Lower leg skin (tissue), 4 donors: ENCODE measurements at regions of chr12 and their contacts with region 1.

Region 1: DNA sequence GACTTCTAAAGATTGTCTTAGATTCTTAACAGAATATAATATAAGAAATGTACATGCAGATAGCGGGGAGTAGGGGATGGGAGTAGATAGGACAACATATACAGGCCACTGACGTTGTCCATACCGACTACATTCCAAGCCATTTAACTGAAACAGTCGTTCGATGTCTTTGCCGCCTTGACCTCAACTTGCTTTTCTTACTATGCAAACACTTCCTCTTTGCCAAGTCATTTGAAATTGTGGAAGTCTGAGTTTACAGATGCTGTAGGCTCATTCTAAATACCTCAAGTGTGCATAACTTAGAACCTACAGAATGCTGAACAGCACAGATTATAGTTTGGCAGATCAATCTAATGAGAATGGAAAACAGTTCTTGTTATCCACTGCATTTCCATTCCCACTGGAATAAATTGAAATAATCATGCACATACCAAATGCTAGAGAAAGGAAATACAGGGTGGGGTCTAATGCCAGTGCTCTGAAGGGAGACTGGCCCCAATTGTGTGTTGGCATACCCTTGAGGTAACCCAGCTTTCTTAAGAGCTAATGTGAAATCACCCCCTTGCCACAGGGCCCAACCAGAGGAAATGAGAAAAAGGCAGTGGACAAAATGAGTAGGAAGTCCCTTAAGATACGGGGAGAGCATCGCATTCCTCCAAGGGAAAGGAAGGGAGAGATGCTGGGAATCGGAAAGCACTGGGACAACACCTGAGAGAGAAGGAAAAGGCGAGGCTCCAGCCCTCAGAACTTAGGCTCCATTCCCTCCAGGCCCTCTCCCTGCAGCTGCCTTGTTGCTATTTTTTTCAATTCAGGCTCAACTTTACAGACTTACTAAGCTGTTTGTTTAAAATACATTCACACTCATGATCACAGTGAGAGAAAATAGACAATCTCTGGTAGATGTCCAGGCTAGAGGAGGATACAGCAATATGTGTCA is 380.9 kb upstream of the TMTC1 start:
- DNase-seq: no peak
- H3K4me3 ChIP-seq: no peak overlapping the region
- CTCF ChIP-seq: no peak
- POLR2A ChIP-seq: no peak

Region 2: DNA sequence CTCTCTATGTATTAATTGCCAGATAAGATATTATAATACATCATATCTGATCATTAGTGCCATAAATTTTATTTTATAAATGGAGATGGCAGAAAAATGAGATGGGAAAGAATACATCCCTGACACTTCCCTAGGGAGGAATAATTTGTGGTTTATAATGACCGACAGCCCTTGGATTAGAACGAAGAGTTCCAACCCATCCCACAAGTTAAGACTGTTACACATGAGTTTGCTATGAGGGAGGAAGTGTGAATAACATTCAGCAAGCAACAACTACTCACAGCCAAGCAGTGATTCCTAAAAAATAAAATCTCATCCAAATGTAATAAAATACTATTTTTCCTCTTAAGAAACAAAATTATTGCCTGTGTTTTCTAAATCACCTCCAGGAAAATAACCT is 1675.4 kb before region 1 on chr12:
- intact Hi-C with region 1: loop called (anchors 5 kb)
- DNase-seq: no peak
- H3K4me3 ChIP-seq: no peak overlapping the region
- CTCF ChIP-seq: no peak
- POLR2A ChIP-seq: no peak

Region 3: GRCh38 chr12:29921307-29921706 is 243.3 kb before region 1 on chr12:
- intact Hi-C with region 1: no loop called
- DNase-seq: no peak
- H3K4me3 ChIP-seq: no peak overlapping the region
- CTCF ChIP-seq: no peak
- POLR2A ChIP-seq: no peak

Region 4: DNA sequence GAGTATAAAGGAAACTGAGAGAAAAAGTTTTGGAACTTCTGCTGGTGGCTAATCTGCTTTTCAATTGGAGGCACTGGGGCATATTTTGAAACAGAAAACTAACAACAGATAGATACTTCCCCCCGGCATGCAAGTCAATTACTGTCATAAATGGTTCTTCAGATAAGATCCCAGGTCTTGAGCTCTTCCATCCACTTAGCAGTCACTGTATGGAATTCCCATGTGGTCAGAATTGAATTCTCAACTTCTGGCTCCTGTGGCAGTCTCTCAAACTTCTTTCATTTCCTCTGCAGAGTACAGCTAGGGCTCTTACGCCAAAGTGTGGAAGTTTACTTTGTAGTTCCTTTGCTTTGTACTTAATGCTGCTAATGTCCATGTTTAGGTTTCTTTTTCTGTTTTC is 78.8 kb after region 1 on chr12:
- intact Hi-C with region 1: no loop called
- DNase-seq: no peak
- H3K4me3 ChIP-seq: no peak overlapping the region
- CTCF ChIP-seq: no peak
- POLR2A ChIP-seq: no peak